ENCODE measurements at regions of chr9 and their contacts with region 1.

Region 1: DNA sequence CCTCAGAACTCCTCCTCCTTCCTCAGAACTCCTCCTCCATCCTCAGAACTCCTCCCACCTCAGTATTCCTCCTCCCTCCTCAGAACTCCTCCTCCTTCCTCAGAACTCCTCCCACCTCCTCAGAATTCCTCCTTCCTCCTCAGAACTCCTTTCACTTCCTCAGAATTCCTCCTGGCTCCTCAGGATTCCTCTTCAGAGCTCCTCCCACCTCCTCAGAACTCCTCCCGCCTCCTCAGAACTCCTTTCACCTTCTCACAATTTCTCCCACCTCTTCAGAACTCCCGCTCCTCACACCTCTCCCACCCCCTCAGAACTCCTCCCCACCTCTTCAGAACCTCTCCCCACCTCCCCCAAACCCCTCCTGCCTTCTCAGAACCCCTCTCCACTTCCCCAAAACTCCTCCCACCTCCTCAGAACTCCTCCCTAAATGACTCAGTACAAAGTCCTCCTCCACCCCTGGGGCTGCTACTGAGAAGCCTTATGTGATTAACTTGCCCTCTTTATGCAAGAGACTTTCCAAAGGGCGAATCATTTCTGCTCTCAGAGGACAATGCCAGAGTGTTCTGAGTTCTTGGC is 23.2 kb downstream of the SLC46A2 start:
- DNase-seq: peak; percentile 92
- ATAC-seq: peak; percentile 65
- H3K4me3 ChIP-seq: peak overlapping the region; percentile 59
- H3K27ac ChIP-seq: peak overlapping the region; percentile 100
- H3K4me1 ChIP-seq: peaks cover 36% of the 10 kb centered on the region
- H3K27me3 ChIP-seq: no peaks in the 10 kb centered on the region
- CTCF ChIP-seq: no peak

Region 2: GRCh38 chr9:112750111-112750767 is 117.3 kb before region 1 on chr9 and contains the start of gene SNX30:
- CTCF ChIA-PET with region 1: no interaction called
- POLR2A ChIA-PET with region 1: no interaction called
- intact Hi-C with region 1: no loop called
- DNase-seq: peak; percentile 86
- ATAC-seq: peak; percentile 49
- H3K4me3 ChIP-seq: peak within 1 kb of the TSS; percentile 95
- H3K27ac ChIP-seq: peak within 1 kb of the TSS; percentile 47
- H3K4me1 ChIP-seq: peaks cover 40% of the 10 kb centered on the region
- H3K27me3 ChIP-seq: no peaks in the 10 kb centered on the region
- CTCF ChIP-seq: no peak
- total RNA-seq, gene SNX30: 6.4 and 13.6 TPM in 2 replicates

Region 3: DNA sequence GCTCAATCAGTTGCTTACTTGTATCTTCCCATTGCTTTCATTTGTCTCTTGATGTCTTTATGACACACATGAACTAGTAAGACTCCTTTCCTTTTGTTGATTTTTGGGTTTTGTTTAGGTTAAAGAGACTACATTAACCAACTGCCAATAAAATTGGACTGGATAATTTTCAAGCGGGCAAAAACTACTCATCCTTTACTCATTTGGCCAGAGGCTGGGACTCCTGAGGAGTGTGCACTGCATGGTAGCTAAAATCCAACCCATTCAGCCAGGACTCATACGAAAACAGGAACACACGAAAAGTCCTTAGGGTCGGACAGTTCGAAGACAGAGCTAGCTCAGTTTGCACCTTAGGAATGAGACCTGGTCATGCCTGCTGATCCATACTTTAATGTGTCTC is 17.2 kb after region 1 on chr9:
- CTCF ChIA-PET with region 1: no interaction called
- POLR2A ChIA-PET with region 1: interaction called, 23 read pairs
- intact Hi-C with region 1: no loop called
- DNase-seq: peak; percentile 88
- ATAC-seq: peak; percentile 71
- H3K4me3 ChIP-seq: peak overlapping the region; percentile 61
- H3K27ac ChIP-seq: peak overlapping the region; percentile 93
- H3K4me1 ChIP-seq: peaks cover 37% of the 10 kb centered on the region
- H3K27me3 ChIP-seq: no peaks in the 10 kb centered on the region
- CTCF ChIP-seq: no peak

Region 4: DNA sequence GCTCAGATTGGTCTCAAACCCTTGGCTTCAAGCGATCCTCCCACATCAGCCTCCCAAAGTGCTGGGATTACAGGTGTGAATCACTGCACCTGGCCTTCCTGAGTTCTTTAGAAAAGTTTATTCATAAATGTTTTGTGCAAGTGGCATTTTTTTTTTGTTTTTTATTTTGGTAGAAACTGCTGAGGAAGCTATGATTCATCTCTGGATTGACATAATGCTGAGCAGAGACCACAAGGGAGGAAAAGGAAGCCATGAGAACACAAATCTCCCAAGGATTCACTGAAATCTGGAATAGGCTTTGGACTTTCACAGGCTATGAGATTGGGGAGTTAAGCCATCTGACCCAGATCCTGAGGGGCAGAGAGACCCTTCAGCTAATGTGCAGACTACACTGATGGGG is 26.5 kb after region 1 on chr9:
- CTCF ChIA-PET with region 1: no interaction called
- POLR2A ChIA-PET with region 1: interaction called, 4 read pairs
- intact Hi-C with region 1: loop called (anchors 1 kb)
- DNase-seq: peak; percentile 68
- ATAC-seq: peak; percentile 51
- H3K4me3 ChIP-seq: no peak overlapping the region
- H3K27ac ChIP-seq: peak overlapping the region; percentile 56
- H3K4me1 ChIP-seq: peaks cover 15% of the 10 kb centered on the region
- H3K27me3 ChIP-seq: no peaks in the 10 kb centered on the region
- CTCF ChIP-seq: no peak

Region 5: GRCh38 chr9:112955550-112955949 is 88.0 kb after region 1 on chr9:
- CTCF ChIA-PET with region 1: no interaction called
- POLR2A ChIA-PET with region 1: no interaction called
- intact Hi-C with region 1: no loop called
- DNase-seq: no peak
- ATAC-seq: no peak
- H3K4me3 ChIP-seq: no peak overlapping the region
- H3K27ac ChIP-seq: no peak overlapping the region
- H3K4me1 ChIP-seq: no peaks in the 10 kb centered on the region
- H3K27me3 ChIP-seq: peaks cover 18% of the 10 kb centered on the region
- CTCF ChIP-seq: no peak

Region 6: DNA sequence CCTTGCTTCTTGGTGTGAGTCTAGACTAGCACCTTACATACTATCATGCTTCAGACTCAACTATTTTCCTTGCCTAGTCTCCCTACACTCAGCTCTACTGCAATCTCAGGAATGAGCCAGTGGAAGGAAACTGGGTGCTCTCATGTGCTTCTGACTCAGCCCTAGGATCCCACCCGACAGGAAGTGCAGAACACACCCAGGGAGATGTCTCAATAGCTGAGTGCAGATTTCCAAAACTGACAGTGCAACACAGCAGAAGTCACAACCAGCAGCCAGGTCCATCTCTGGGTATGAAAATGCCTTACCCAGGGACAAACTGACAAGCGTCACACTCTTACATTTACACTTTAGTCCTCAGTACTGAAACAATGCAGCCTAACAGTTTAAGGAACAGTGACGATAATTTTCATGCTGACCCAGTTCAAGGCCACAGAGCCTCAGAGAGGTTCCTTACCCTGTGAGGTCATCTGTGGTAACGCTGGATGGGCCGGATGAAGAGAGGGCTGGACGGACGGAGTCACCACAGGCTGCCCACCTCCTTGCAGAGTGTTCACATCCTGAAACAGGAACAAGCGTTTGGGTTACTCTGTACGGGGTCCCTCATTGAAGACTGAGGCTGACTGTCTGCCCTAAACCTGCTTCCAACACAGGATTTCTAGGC is 320.6 kb after region 1 on chr9:
- CTCF ChIA-PET with region 1: no interaction called
- POLR2A ChIA-PET with region 1: interaction called, 11 read pairs
- intact Hi-C with region 1: no loop called
- DNase-seq: peak; percentile 65
- ATAC-seq: peak; percentile 98
- H3K4me3 ChIP-seq: no peak overlapping the region
- H3K27ac ChIP-seq: peak overlapping the region; percentile 40
- H3K4me1 ChIP-seq: peaks cover 15% of the 10 kb centered on the region
- H3K27me3 ChIP-seq: no peaks in the 10 kb centered on the region
- CTCF ChIP-seq: no peak